Esophagus squamous epithelium (tissue), 5 donors: ENCODE measurements at regions of chr1 and their contacts with region 1.

Region 1: DNA sequence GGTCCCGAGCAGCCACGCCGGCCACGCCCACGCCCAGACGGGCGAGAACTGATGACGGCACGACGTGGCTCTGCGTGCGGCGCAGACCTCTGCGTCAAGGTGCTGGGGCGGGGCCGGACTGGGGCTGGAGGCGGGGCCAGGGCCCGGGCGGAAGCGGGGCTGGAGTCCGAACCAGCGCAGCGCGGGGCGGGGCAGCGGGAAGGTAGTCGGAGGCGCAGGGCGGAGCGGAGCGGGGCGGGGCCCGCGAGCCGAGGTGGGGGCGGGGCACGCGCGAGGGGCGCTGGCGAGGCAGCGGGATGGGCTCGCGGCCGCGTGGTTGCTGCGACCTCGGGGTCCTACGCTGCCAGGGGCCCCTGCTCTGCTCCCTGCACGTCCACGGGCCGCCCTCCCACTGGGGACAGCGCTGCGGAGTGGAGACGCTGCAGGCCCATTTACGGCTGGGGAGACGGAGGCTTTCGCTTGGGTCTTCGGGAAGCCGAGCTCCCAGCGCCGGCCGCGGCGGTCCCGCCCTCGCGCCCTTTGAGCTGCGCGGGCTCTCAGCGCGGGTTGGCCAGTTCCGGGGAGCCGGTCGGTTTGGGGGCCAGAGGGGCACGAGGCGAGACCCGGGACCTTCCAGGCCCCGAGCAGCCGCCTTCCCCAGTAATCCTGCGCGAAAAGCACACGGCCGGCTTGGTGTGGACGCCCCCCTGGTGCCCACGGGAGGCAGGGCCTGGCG is at the start of gene PEX10:
- DNase-seq: peak; percentile 62
- H3K4me3 ChIP-seq: peak within 1 kb of the TSS; percentile 70 to 100 (median 97)
- H3K27ac ChIP-seq: peak within 1 kb of the TSS; percentile 92 to 96 (median 94)
- H3K4me1 ChIP-seq: peaks cover 34 to 61% (median 37%) of the 10 kb centered on the region in 3 donors
- H3K27me3 ChIP-seq: peaks cover 0 to 23% (median 0%) of the 10 kb centered on the region in 4 donors
- CTCF ChIP-seq: peak in 2 of 6 experiments; percentile 3 to 32
- POLR2A ChIP-seq: peak in 3 of 4 donors; percentile 36 to 78 (median 52)
- total RNA-seq, gene PEX10: 23.2 to 33.2 (median 27.2) TPM

Region 2: GRCh38 chr1:2545759-2546514 is 133.3 kb after region 1 on chr1:
- intact Hi-C with region 1: loop called (anchors 5 kb)
- DNase-seq: peak; percentile 73
- H3K4me3 ChIP-seq: peak overlapping the region; percentile 36 to 78 (median 57)
- H3K27ac ChIP-seq: peak overlapping the region; percentile 89 to 98 (median 97)
- H3K4me1 ChIP-seq: peaks cover 56 to 90% (median 57%) of the 10 kb centered on the region in 3 donors
- H3K27me3 ChIP-seq: peaks cover 0 to 18% (median 0%) of the 10 kb centered on the region in 4 donors
- CTCF ChIP-seq: no peak
- POLR2A ChIP-seq: peak in 1 of 4 donors; percentile 76